CD8-positive, alpha-beta T cell (primary cell): ENCODE measurements at regions of chr14 and their contacts with region 1.

Region 1: DNA sequence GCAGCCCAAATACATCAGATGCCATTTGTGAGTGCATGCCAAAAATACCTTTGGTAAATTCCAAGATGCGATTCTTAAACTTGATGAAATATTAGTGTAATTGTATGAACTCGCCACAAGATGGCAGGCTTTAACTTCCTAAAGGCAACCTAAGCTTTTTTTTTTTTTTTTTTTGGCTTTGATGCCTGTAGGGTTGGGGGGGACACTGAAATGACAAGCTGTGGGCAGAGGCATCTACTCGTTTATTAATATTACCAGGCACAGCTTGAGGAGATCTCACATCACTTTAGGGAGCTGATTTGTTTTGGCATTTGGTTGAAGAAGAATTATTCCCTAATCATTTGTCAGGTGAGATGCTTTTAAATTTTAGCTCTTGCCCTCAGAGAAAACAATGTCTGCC is 126.7 kb upstream of the CCDC196 start:
- DNase-seq: peak in 4 of 9 experiments; percentile 2 to 78 (median 50)
- ATAC-seq: peak; percentile 51
- H3K4me3 ChIP-seq: no peak overlapping the region
- H3K4me3 Mint-ChIP-seq: no peak overlapping the region
- H3K27ac ChIP-seq: no peak overlapping the region
- H3K27ac Mint-ChIP-seq: no peak overlapping the region
- H3K4me1 ChIP-seq: no peaks in the 10 kb centered on the region
- H3K4me1 Mint-ChIP-seq: no peaks in the 10 kb centered on the region
- H3K27me3 ChIP-seq: no peaks in the 10 kb centered on the region
- H3K27me3 Mint-ChIP-seq: no peaks in the 10 kb centered on the region
- CTCF ChIP-seq: peak; percentile 75

Region 2: DNA sequence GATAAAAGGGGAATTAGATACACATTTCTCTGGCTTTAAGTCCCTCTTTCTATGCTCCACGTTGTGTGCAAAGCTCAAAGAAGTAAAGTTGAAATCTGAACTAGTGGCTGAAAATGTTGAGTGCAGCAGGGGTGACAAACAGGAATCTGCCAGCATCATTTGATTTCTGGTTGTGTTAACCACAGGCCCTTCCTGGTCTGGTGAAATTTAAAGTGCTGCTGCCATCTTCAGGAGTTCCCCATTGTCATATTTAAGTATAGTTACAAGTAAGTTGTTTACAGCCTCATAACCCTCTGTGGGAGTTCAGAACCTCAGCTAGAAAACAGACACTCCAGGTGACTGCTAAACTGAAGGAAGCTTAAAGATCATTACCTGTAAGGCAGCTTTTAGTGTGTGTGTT is 35.8 kb after region 1 on chr14:
- CTCF ChIA-PET with region 1: interaction called, 19 read pairs
- POLR2A ChIA-PET with region 1: no interaction called
- intact Hi-C with region 1: loop called in 1 of 2 experiments (anchors 2 kb)
- DNase-seq: peak in 2 of 9 experiments; percentile 52 to 70
- ATAC-seq: peak; percentile 59
- H3K4me3 ChIP-seq: no peak overlapping the region
- H3K4me3 Mint-ChIP-seq: no peak overlapping the region
- H3K27ac ChIP-seq: no peak overlapping the region
- H3K27ac Mint-ChIP-seq: peak overlapping the region; percentile 30
- H3K4me1 ChIP-seq: peaks cover 5% of the 10 kb centered on the region
- H3K4me1 Mint-ChIP-seq: peaks cover 6% of the 10 kb centered on the region
- H3K27me3 ChIP-seq: no peaks in the 10 kb centered on the region
- H3K27me3 Mint-ChIP-seq: no peaks in the 10 kb centered on the region
- CTCF ChIP-seq: no peak

Region 3: DNA sequence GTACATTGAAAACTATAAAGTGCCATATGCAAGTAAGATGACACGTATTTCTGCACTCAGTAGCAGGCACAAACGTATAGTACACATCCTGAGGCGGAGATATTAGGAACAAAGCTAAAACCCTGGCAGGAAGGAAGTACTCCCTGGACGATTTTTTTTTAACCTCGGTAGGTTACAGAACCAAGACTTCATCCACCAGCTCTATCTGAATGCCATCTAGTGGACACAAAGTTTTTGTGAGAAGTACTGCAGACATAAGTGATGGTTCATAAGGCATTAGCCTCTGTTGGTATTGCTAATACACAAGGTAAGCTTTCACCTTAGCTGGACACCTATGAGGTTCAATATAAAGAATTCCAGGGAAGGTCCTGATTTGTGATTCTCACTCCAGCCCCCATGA is 43.7 kb after region 1 on chr14:
- CTCF ChIA-PET with region 1: interaction called, 45 read pairs
- POLR2A ChIA-PET with region 1: no interaction called
- intact Hi-C with region 1: loop called in 1 of 2 experiments (anchors 1 kb)
- DNase-seq: peak in 2 of 9 experiments; percentile 29 to 51
- ATAC-seq: no peak
- H3K4me3 ChIP-seq: no peak overlapping the region
- H3K4me3 Mint-ChIP-seq: no peak overlapping the region
- H3K27ac ChIP-seq: no peak overlapping the region
- H3K27ac Mint-ChIP-seq: no peak overlapping the region
- H3K4me1 ChIP-seq: no peaks in the 10 kb centered on the region
- H3K4me1 Mint-ChIP-seq: no peaks in the 10 kb centered on the region
- H3K27me3 ChIP-seq: no peaks in the 10 kb centered on the region
- H3K27me3 Mint-ChIP-seq: no peaks in the 10 kb centered on the region
- CTCF ChIP-seq: no peak

Region 4: GRCh38 chr14:66540038-66540437 is 180.5 kb after region 1 on chr14:
- CTCF ChIA-PET with region 1: no interaction called
- POLR2A ChIA-PET with region 1: no interaction called
- intact Hi-C with region 1: loop called in 1 of 2 experiments (anchors 10 kb)
- DNase-seq: no peak
- ATAC-seq: no peak
- H3K4me3 ChIP-seq: no peak overlapping the region
- H3K4me3 Mint-ChIP-seq: no peak overlapping the region
- H3K27ac ChIP-seq: no peak overlapping the region
- H3K27ac Mint-ChIP-seq: no peak overlapping the region
- H3K4me1 ChIP-seq: no peaks in the 10 kb centered on the region
- H3K4me1 Mint-ChIP-seq: peaks cover 13% of the 10 kb centered on the region
- H3K27me3 ChIP-seq: no peaks in the 10 kb centered on the region
- H3K27me3 Mint-ChIP-seq: no peaks in the 10 kb centered on the region
- CTCF ChIP-seq: no peak